MCF 10A (cell line): ENCODE measurements at regions of chr3 and their contacts with region 1.

Region 1: GRCh38 chr3:63349583-63350521 is 71.7 kb downstream of the SYNPR start:
- DNase-seq: peak; percentile 70
- H3K4me3 Mint-ChIP-seq: no peak overlapping the region
- H3K27ac Mint-ChIP-seq: no peak overlapping the region
- H3K4me1 Mint-ChIP-seq: no peaks in the 10 kb centered on the region
- H3K27me3 Mint-ChIP-seq: peaks cover 72% of the 10 kb centered on the region
- CTCF ChIP-seq: peak; percentile 50

Region 2: DNA sequence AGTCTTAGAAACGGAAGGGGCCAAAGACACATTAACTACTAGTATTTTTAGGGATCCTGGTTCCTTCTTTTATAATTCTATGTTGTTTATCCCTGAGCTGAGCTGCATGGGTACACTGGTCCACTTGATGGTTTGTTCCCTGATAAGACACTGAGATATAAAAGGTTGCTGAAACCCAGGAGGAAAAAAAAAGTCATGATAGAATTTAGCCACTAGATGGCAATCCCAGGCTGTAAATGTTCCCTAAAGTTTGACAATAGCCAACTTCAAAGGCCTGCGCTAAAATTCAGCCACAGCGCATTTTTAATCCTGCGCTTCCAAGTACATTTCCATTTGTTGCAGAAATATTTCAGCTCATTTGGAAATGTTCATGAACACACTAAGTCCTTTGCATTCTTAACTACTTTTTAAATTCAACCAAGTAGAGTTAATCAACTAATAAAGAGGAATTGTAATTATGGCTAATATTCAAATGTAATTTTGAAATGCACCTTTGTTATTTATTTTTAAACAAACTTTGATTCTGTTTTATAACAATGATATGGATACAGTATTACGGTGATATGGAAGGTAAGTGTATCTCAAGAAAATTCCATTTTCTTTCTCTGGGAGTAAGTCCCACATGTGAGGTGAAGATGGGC is 727.2 kb before region 1 on chr3:
- CTCF ChIA-PET with region 1: interaction called, 17 read pairs
- POLR2A ChIA-PET with region 1: no interaction called
- intact Hi-C with region 1: no loop called
- DNase-seq: peak; percentile 68
- H3K4me3 Mint-ChIP-seq: no peak overlapping the region
- H3K27ac Mint-ChIP-seq: no peak overlapping the region
- H3K4me1 Mint-ChIP-seq: peaks cover 6% of the 10 kb centered on the region
- H3K27me3 Mint-ChIP-seq: no peaks in the 10 kb centered on the region
- CTCF ChIP-seq: peak; percentile 64

Region 3: DNA sequence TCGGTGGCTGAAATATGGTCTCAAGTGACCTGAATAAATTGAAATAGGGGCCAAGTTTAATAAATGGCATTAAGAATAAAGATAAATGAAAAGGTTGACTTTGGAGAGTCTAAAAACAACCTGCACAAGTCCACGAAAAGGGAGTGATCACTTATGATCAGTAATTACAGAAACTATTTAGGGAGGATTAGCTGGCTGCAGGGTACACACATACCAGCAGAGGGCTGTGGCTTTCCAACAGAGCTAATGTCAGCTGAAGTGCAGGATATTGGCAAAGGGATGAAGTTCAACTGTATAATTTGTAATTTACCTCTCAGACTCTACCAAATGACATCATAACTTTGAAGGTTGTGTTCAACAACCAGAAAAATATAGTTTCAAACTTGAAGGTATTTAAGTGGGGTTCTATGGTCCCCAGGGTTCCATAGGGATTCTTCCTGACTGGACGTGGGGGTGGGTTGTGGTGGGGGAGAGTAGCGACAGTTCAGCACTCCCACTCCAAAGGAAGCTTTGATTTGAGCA is 15.1 kb after region 1 on chr3:
- CTCF ChIA-PET with region 1: interaction called, 31 read pairs
- POLR2A ChIA-PET with region 1: no interaction called
- intact Hi-C with region 1: no loop called
- DNase-seq: no peak
- H3K4me3 Mint-ChIP-seq: no peak overlapping the region
- H3K27ac Mint-ChIP-seq: no peak overlapping the region
- H3K4me1 Mint-ChIP-seq: no peaks in the 10 kb centered on the region
- H3K27me3 Mint-ChIP-seq: peaks cover 40% of the 10 kb centered on the region
- CTCF ChIP-seq: no peak

Region 4: DNA sequence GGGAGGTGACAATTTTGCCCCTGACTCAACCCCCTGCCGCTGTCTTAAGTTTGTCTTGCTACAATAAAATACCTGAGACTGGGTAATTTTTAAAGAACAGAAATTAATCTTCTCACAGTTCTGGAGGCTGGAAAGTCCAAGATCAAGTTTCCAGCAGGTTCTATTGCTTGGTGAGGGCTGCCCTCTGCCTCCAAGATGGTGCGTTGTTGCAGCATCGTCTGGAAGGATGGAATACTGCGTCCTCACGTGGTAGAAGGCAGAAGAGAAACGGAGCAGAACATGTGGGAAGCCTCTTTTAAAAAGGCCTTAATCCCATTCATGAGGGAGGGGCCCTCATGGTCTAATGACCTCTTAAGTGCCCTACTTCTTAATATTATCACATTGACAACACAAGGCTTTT is 215.4 kb after region 1 on chr3:
- CTCF ChIA-PET with region 1: no interaction called
- POLR2A ChIA-PET with region 1: no interaction called
- intact Hi-C with region 1: loop called (anchors 5 kb)
- DNase-seq: peak; percentile 2
- H3K4me3 Mint-ChIP-seq: no peak overlapping the region
- H3K27ac Mint-ChIP-seq: no peak overlapping the region
- H3K4me1 Mint-ChIP-seq: no peaks in the 10 kb centered on the region
- H3K27me3 Mint-ChIP-seq: peaks cover 26% of the 10 kb centered on the region
- CTCF ChIP-seq: no peak

Region 5: DNA sequence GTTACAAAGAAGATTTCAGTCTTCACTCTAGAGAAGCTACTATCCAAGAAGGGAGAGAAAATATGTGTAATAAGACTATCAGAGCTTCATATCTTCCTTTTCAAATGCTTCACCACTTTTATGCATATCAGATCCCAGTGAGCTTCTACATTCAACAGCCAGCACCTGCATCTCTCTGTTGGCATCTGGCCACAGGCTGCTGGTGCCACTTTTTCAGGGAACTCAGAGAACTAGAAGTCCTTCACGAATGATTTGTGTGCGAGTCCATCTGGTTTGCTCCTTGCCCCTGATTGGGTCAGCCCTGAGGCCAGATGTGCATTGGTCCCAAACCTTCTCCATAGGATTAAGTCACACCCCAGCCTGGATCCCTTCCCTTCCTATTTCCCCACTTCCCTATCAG is 324.7 kb after region 1 on chr3:
- CTCF ChIA-PET with region 1: interaction called, 11 read pairs
- POLR2A ChIA-PET with region 1: no interaction called
- intact Hi-C with region 1: no loop called
- DNase-seq: no peak
- H3K4me3 Mint-ChIP-seq: no peak overlapping the region
- H3K27ac Mint-ChIP-seq: no peak overlapping the region
- H3K4me1 Mint-ChIP-seq: peaks cover 6% of the 10 kb centered on the region
- H3K27me3 Mint-ChIP-seq: no peaks in the 10 kb centered on the region
- CTCF ChIP-seq: no peak

Region 6: DNA sequence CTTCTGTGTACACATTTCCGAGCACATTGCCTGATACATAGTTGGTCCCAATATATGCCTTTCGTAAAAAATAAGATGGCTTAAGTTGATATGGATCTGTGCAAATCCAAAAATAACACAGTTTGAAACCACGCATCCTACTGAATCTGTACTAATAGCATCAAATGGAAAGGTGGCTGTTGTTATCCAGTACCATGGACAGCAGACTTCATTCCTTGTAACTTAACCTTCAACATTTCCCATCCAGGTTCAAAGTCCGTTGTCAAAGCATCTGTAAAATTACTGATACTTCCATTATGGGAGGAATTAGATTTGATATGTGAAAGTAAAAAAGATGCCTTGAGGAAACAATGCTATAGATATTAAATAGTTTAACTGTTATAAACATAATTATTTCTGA is 403.7 kb after region 1 on chr3:
- CTCF ChIA-PET with region 1: no interaction called
- POLR2A ChIA-PET with region 1: no interaction called
- intact Hi-C with region 1: no loop called
- DNase-seq: peak; percentile 57
- H3K4me3 Mint-ChIP-seq: no peak overlapping the region
- H3K27ac Mint-ChIP-seq: no peak overlapping the region
- H3K4me1 Mint-ChIP-seq: no peaks in the 10 kb centered on the region
- H3K27me3 Mint-ChIP-seq: no peaks in the 10 kb centered on the region
- CTCF ChIP-seq: no peak

Region 7: DNA sequence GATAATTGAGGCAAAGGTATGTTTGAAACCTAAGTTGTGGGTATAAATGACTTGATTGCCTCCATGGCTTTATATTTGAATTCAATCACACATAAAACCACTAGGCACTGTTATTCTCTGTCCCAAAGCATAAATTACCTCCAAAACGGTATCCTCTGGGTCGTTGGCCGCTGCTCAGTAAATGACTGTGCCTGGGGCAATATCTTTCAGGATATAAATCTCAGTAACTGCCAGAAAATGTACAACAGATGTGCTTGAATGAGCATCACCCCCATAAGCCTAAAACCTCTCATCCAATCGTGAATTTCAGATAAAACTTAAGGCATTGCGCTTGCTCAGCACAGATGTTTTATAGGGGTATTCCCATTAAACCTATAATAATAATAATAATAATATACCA is 450.2 kb after region 1 on chr3:
- CTCF ChIA-PET with region 1: interaction called, 73 read pairs
- POLR2A ChIA-PET with region 1: no interaction called
- intact Hi-C with region 1: no loop called
- DNase-seq: no peak
- H3K4me3 Mint-ChIP-seq: no peak overlapping the region
- H3K27ac Mint-ChIP-seq: no peak overlapping the region
- H3K4me1 Mint-ChIP-seq: no peaks in the 10 kb centered on the region
- H3K27me3 Mint-ChIP-seq: peaks cover 21% of the 10 kb centered on the region
- CTCF ChIP-seq: no peak

Region 8: GRCh38 chr3:63911873-63912767 is 562.3 kb after region 1 on chr3 and contains the start of gene SCAANT1:
- CTCF ChIA-PET with region 1: interaction called, 6 read pairs
- POLR2A ChIA-PET with region 1: no interaction called
- intact Hi-C with region 1: loop called (anchors 5 kb)
- DNase-seq: peak; percentile 92
- H3K4me3 Mint-ChIP-seq: peak within 1 kb of the TSS; percentile 77
- H3K27ac Mint-ChIP-seq: peak within 1 kb of the TSS; percentile 91
- H3K4me1 Mint-ChIP-seq: no peaks in the 10 kb centered on the region
- H3K27me3 Mint-ChIP-seq: no peaks in the 10 kb centered on the region
- CTCF ChIP-seq: no peak
- total RNA-seq, gene SCAANT1: not detected in 2 replicates